ENCODE measurements at regions of chr3 and their contacts with region 1.

Region 1: GRCh38 chr3:112293368-112294321 is at the start of gene SLC9C1:
- DNase-seq: peak; percentile 85
- ATAC-seq: peak; percentile 78
- H3K4me3 ChIP-seq: peak within 1 kb of the TSS; percentile 52; the same call in 1 of the 2 replicates
- H3K27ac ChIP-seq: peak within 1 kb of the TSS; percentile 71
- H3K4me1 ChIP-seq: peaks cover 7% of the 10 kb centered on the region; the same call in 1 of the 2 replicates
- H3K27me3 ChIP-seq: no peaks in the 10 kb centered on the region
- CTCF ChIP-seq: peak; percentile 50 to 76 (median 71); a peak in 5 of 6 replicates
- EP300 ChIP-seq: no peak
- POLR2A ChIP-seq: no peak
- RAD21 ChIP-seq: peak; percentile 81
- polyA plus RNA-seq, gene SLC9C1: not detected

Region 2: GRCh38 chr3:112111785-112112402 is 181.8 kb before region 1 on chr3:
- CTCF ChIA-PET with region 1: interaction called, 79 read pairs
- POLR2A ChIA-PET with region 1: interaction called, 11 read pairs
- RAD21 ChIA-PET with region 1: interaction called, 50 read pairs
- SMC1A ChIA-PET with region 1: interaction called, 40 read pairs
- in situ Hi-C with region 1: loop called (anchors 5 kb)
- intact Hi-C with region 1: loop called (anchors 1 kb)
- DNase-seq: no peak
- ATAC-seq: peak; percentile 59
- H3K4me3 ChIP-seq: no peak overlapping the region
- H3K27ac ChIP-seq: peak overlapping the region; percentile 95
- H3K4me1 ChIP-seq: peaks cover 46% of the 10 kb centered on the region
- H3K27me3 ChIP-seq: no peaks in the 10 kb centered on the region
- CTCF ChIP-seq: peak; percentile 91 to 98 (median 93); a peak in 5 of 6 replicates
- EP300 ChIP-seq: no peak
- POLR2A ChIP-seq: no peak
- RAD21 ChIP-seq: peak; percentile 100

Region 3: DNA sequence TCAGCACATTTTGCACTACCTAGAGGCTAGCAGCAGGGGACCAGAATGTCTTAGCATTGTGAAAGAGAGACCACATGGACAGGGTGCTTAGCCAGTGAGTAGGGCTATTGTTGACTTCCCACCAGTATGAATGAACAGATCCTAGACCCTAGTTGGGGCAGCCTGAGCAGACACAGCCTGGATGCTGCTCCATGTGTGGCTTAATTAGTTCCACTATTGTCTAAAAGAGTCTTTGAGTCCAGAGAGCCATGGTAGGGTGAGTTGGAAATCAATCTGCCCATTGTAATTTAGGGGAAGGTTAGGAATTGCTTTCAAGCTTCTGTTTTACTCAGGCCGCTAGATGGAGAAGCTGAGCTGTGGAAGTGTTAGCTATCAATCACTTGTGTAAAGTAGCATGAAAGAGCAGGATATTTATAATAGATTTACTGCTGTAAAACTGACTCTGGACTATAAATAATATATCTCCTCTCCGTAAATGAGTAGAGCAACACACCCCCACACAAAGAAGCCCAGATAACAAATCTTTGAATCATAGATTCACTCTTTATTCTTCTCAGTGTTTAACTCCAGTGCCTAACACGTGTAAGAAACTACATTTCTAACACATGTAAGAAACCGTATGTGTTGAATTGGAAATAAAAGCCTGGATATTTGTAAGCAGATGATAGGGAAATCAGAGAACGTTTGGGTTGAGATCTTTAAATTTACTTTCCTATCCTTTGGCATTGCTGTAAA is 156.5 kb before region 1 on chr3:
- CTCF ChIA-PET with region 1: interaction called, 142 read pairs
- POLR2A ChIA-PET with region 1: interaction called, 6 read pairs
- RAD21 ChIA-PET with region 1: interaction called, 88 read pairs
- SMC1A ChIA-PET with region 1: interaction called, 85 read pairs
- in situ Hi-C with region 1: loop called (anchors 5 kb)
- intact Hi-C with region 1: loop called (anchors 1 kb)
- DNase-seq: no peak
- ATAC-seq: peak; percentile 42
- H3K4me3 ChIP-seq: no peak overlapping the region
- H3K27ac ChIP-seq: peak overlapping the region; percentile 99
- H3K4me1 ChIP-seq: peaks cover 47% of the 10 kb centered on the region
- H3K27me3 ChIP-seq: no peaks in the 10 kb centered on the region
- CTCF ChIP-seq: peak; percentile 67 to 88 (median 81); a peak in 5 of 6 replicates
- EP300 ChIP-seq: 0 out of 4 replicates have a peak, but pooled peaks of 1 of the 2 experiments have one; percentile 32
- POLR2A ChIP-seq: peak; percentile 67
- RAD21 ChIP-seq: peak; percentile 94

Region 4: DNA sequence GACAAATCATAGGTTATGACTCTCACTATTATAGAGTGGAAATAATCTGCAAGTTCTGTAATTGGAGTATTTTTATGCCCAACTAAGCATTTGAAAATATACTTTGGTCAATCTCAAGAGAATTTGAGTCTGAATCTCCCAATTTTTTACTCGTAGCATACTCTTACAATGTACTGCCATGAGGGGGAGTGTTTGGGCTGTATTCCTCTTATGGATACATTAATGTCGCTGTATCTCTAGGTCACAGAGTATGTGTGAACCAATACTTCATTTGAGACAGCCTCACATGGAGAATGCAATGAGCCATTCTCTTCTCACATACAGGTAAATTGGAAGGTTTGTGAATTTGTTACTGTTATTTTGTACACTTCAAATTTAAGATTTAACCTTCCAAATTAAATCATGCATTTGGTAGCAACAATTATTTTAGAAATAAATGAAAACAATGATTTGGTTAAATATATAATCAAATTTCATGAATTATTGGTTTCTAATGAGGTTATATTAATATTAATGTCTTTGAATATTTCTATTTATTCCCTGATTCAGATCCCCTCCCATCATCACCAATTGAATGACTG is 33.8 kb after region 1 on chr3:
- CTCF ChIA-PET with region 1: interaction called, 103 read pairs
- POLR2A ChIA-PET with region 1: interaction called, 3 read pairs
- RAD21 ChIA-PET with region 1: interaction called, 75 read pairs
- SMC1A ChIA-PET with region 1: interaction called, 97 read pairs
- in situ Hi-C with region 1: no loop called
- intact Hi-C with region 1: loop called (anchors 2 kb)
- DNase-seq: peak; percentile 79
- ATAC-seq: peak; percentile 100
- H3K4me3 ChIP-seq: no peak overlapping the region
- H3K27ac ChIP-seq: no peak overlapping the region
- H3K4me1 ChIP-seq: no peaks in the 10 kb centered on the region
- H3K27me3 ChIP-seq: no peaks in the 10 kb centered on the region
- CTCF ChIP-seq: peak; percentile 60 to 82 (median 64)
- EP300 ChIP-seq: no peak
- POLR2A ChIP-seq: no peak
- RAD21 ChIP-seq: peak; percentile 98

Region 5: DNA sequence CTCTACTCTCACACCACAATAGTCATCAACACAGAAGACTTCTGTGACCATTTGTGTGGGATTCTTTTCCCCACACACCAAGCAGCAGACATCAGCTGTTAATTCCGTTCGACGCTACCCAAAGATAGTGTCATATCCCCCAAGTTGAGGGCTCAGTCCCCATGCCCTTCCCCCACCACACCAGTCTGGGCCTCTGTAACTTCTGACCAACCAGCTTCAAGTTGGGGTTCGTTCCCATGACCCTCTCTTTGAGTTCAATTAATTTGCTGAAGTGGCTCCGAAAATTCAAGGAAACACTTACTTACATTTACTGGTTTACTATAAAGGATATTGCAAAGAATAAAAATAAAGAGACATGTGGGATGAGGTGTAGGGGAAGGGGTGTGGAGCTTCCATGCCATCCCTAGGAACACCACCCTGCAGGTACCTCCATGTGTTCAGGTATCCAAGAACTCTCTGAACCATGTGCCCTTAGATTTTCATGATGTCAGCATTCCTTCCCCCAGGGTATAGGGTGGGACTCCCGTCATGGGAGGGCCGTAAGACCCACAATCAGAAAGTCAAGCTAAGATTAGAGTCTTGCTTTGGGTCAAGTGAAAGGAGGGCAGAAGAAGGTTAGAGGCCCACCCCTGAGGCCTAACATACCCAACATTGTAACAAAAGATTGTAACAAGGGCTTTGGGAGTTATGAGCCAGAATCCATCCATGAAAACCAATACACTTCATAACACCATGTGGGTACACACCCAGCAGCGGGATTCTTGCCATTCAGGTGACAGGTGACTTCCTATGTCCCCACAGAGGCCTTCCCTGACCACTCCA is 123.0 kb after region 1 on chr3:
- CTCF ChIA-PET with region 1: no interaction called
- POLR2A ChIA-PET with region 1: no interaction called
- RAD21 ChIA-PET with region 1: no interaction called
- SMC1A ChIA-PET with region 1: no interaction called
- in situ Hi-C with region 1: no loop called
- intact Hi-C with region 1: no loop called
- DNase-seq: no peak
- ATAC-seq: no peak
- H3K4me3 ChIP-seq: no peak overlapping the region
- H3K27ac ChIP-seq: no peak overlapping the region
- H3K4me1 ChIP-seq: no peaks in the 10 kb centered on the region
- H3K27me3 ChIP-seq: no peaks in the 10 kb centered on the region
- CTCF ChIP-seq: no peak
- EP300 ChIP-seq: no peak
- POLR2A ChIP-seq: no peak
- RAD21 ChIP-seq: no peak

Region 6: DNA sequence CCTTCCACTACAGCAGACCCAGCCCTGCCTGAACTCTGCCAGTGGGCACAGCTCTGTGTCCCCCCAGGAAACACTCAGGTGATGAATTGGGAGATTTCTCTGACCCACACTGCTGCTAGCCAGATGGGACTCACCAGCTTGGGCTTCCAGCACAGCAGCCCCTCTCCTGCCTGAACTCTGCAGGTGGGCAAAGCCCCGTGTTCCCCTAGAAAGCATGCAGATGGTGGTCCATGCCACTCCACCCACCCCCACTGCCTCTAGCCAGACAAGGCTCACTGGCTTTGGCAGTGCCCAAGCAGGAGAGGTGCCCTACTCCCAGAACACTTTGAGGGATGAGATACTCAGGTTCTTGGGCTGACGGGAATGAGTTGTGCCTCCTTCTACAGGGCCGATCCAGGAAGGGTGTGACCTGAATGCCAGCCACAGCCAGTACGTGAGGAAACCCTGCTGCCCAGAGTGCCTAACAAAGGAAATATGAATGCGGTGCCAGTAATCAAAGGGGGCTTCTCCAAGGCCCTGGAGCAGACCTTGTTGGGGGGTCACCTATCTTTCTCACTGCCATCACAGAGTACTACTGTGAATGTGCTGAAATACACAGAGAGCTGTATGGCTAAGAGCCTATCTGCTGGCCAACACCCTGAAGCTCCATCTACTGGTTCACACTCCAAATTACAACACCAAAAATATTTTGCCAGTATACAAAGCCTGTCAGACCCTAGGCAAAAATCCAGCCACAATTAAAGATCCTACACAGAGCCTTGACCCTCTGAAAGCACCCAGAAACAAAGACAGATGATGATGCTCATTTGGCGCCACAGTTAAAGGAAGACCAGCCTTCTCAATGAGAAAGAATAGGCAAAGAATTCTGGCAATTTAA is 143.7 kb after region 1 on chr3:
- CTCF ChIA-PET with region 1: interaction called, 9 read pairs
- POLR2A ChIA-PET with region 1: no interaction called
- RAD21 ChIA-PET with region 1: interaction called, 11 read pairs
- SMC1A ChIA-PET with region 1: interaction called, 12 read pairs
- in situ Hi-C with region 1: no loop called
- intact Hi-C with region 1: no loop called
- DNase-seq: no peak
- ATAC-seq: peak; percentile 79
- H3K4me3 ChIP-seq: no peak overlapping the region
- H3K27ac ChIP-seq: no peak overlapping the region
- H3K4me1 ChIP-seq: peaks cover 5% of the 10 kb centered on the region
- H3K27me3 ChIP-seq: no peaks in the 10 kb centered on the region
- CTCF ChIP-seq: peak; percentile 22 to 62 (median 28); a peak in 4 of 6 replicates
- EP300 ChIP-seq: no peak
- POLR2A ChIP-seq: no peak
- RAD21 ChIP-seq: peak; percentile 84

Region 7: DNA sequence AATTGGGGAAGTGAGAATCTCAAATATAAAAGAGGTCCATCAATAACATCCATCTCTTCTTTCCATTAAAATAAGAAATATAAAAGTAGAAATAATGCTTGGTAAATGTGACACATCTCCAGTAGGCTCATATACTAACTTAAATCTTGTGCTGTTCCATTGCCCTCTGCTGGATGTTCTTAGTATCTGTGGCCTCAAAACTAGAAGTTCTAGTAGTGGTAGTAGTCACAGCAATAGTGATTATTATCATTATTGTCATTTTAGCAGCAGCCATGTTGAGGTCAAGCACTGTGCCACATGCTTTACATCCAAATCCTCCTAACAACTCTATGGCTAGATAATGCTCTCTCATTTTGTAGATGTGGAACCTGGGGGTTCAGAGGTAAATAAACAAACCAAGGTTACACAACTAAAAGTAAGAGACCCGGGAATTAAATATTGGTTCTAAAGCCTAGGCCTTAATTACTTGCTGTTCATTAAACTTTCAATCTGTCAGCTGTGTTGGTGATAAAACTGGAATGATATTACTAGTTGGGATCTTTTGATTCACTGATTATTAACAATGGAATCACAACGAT is 225.9 kb after region 1 on chr3:
- CTCF ChIA-PET with region 1: interaction called, 76 read pairs
- POLR2A ChIA-PET with region 1: interaction called, 3 read pairs
- RAD21 ChIA-PET with region 1: interaction called, 29 read pairs
- SMC1A ChIA-PET with region 1: interaction called, 46 read pairs
- in situ Hi-C with region 1: no loop called
- intact Hi-C with region 1: loop called (anchors 1 kb)
- DNase-seq: peak; percentile 68
- ATAC-seq: peak; percentile 83
- H3K4me3 ChIP-seq: no peak overlapping the region
- H3K27ac ChIP-seq: peak overlapping the region; percentile 54
- H3K4me1 ChIP-seq: peaks cover 4% of the 10 kb centered on the region; the same call in 1 of the 2 replicates
- H3K27me3 ChIP-seq: no peaks in the 10 kb centered on the region
- CTCF ChIP-seq: peak; percentile 68 to 72 (median 70)
- EP300 ChIP-seq: no peak
- POLR2A ChIP-seq: no peak
- RAD21 ChIP-seq: peak; percentile 92

Region 8: GRCh38 chr3:112635671-112636070 is 342.0 kb after region 1 on chr3:
- CTCF ChIA-PET with region 1: interaction called, 4 read pairs
- POLR2A ChIA-PET with region 1: no interaction called
- RAD21 ChIA-PET with region 1: interaction called, 3 read pairs
- SMC1A ChIA-PET with region 1: interaction called, 10 read pairs
- in situ Hi-C with region 1: no loop called
- intact Hi-C with region 1: no loop called
- DNase-seq: no peak
- ATAC-seq: peak; percentile 29; the same call in 2 of the 3 replicates
- H3K4me3 ChIP-seq: no peak overlapping the region
- H3K27ac ChIP-seq: no peak overlapping the region
- H3K4me1 ChIP-seq: peaks cover 7% of the 10 kb centered on the region
- H3K27me3 ChIP-seq: no peaks in the 10 kb centered on the region
- CTCF ChIP-seq: no peak
- EP300 ChIP-seq: no peak
- POLR2A ChIP-seq: no peak
- RAD21 ChIP-seq: no peak

Measured in GM12878 (cell line).